ENCODE measurements at regions of chr4 and their contacts with region 1.

Region 1: GRCh38 chr4:120454788-120455187 is 388.1 kb upstream of the MAD2L1 start:
- DNase-seq: no peak
- H3K4me3 ChIP-seq: no peak overlapping the region
- H3K27ac ChIP-seq: no peak overlapping the region
- H3K4me1 ChIP-seq: no peaks in the 10 kb centered on the region
- H3K27me3 ChIP-seq: no peaks in the 10 kb centered on the region
- CTCF ChIP-seq: no peak
- POLR2A ChIP-seq: no peak

Region 2: DNA sequence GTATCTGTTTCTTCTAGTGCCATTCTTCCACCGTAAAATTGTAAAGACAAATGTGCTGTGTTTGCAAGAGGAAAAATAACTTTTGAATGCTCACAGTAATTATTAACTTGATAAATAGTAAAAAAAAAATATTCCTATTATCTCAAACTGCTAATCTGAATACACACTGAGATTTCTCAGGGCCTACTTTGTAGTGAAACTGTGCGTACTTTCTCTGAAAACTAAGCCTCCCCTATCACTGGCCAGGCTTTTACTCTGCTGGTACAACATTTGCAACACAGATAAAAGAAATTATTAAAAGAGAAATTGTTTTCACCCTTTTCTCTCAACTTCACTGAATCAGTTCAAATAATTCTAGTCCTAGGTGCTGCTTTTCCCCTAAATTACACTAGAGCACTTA is 330.4 kb after region 1 on chr4:
- intact Hi-C with region 1: loop called (anchors 5 kb)
- DNase-seq: no peak
- H3K4me3 ChIP-seq: no peak overlapping the region
- H3K27ac ChIP-seq: no peak overlapping the region
- H3K4me1 ChIP-seq: no peaks in the 10 kb centered on the region
- H3K27me3 ChIP-seq: no peaks in the 10 kb centered on the region
- CTCF ChIP-seq: no peak
- POLR2A ChIP-seq: no peak

Measured in breast epithelium (tissue), 4 donors.